B cell (primary cell): ENCODE measurements at regions of chr10 and their contacts with region 1.

Region 1: DNA sequence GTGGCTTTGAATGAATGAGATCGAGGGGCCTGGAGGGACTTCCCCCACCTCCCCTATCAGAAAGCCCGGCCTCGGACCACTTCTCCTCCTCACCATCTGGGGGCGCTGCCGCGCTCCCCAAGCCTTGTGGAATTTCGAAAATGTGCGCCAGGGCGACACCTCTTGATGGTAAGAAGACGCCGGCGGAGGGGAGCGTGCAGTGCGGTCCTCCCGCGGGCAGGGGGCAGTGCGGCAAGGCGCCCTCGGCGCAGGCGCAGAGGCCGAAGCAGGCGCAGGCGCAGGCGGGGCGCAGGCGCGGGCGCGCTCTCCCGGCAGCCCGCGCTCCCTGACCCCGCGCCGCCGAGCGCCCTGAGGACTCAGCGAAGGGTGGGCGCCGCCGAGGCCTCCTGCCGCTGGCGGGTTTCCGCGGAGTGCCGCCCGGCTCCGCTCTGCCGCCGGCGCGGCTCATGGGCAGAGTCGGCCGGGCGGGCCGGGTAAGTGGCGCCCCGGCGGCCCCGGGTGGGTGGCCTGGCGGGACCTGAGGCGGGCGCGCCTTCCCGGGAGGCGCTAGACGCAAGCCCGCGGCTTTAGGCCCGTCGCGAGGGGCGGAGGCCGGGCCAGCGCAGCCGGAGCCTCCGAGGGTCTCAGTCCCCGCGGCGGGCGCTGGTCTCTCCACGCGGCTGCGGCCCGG is at the start of gene RBM17:
- DNase-seq: peak; percentile 99
- ATAC-seq: peak; percentile 88
- H3K4me3 ChIP-seq: peak within 1 kb of the TSS; percentile 70 to 94 (median 77)
- H3K4me3 Mint-ChIP-seq: peak within 1 kb of the TSS; percentile 90
- H3K27ac ChIP-seq: peak within 1 kb of the TSS in 1 of 2 donors; percentile 78
- H3K27ac Mint-ChIP-seq: peak within 1 kb of the TSS; percentile 92
- H3K4me1 ChIP-seq: peaks cover 41 to 43% of the 10 kb centered on the region in 2 donors
- H3K4me1 Mint-ChIP-seq: peaks cover 63% of the 10 kb centered on the region
- H3K27me3 ChIP-seq: no peaks in the 10 kb centered on the region
- H3K27me3 Mint-ChIP-seq: no peaks in the 10 kb centered on the region
- CTCF ChIP-seq: peak; percentile 100
- total RNA-seq, gene RBM17: 162 and 168 TPM in 2 replicates

Region 2: GRCh38 chr10:5889624-5890451 is 199.0 kb before region 1 on chr10 and contains the starts of genes ANKRD16 and FBH1:
- CTCF ChIA-PET with region 1: interaction called, 5 read pairs
- POLR2A ChIA-PET with region 1: interaction called, 3 read pairs
- intact Hi-C with region 1: loop called (anchors 1 kb)
- DNase-seq: peak; percentile 99
- ATAC-seq: peak; percentile 84
- H3K4me3 ChIP-seq: peak within 1 kb of the TSS; percentile 51 to 88 (median 77)
- H3K4me3 Mint-ChIP-seq: peak within 1 kb of the TSS; percentile 94
- H3K27ac ChIP-seq: peak within 1 kb of the TSS; percentile 48 to 77
- H3K27ac Mint-ChIP-seq: peak within 1 kb of the TSS; percentile 88
- H3K4me1 ChIP-seq: peaks cover 28 to 33% of the 10 kb centered on the region in 2 donors
- H3K4me1 Mint-ChIP-seq: peaks cover 58% of the 10 kb centered on the region
- H3K27me3 ChIP-seq: no peaks in the 10 kb centered on the region
- H3K27me3 Mint-ChIP-seq: no peaks in the 10 kb centered on the region
- CTCF ChIP-seq: no peak
- total RNA-seq, gene ANKRD16: 12.6 and 13.1 TPM in 2 replicates
- total RNA-seq, gene FBH1: 129 and 138 TPM in 2 replicates

Region 3: GRCh38 chr10:6036861-6037321 is 52.0 kb before region 1 on chr10:
- CTCF ChIA-PET with region 1: interaction called, 13 read pairs
- POLR2A ChIA-PET with region 1: no interaction called
- intact Hi-C with region 1: no loop called
- DNase-seq: peak; percentile 49
- ATAC-seq: peak; percentile 64
- H3K4me3 ChIP-seq: no peak overlapping the region
- H3K4me3 Mint-ChIP-seq: peak overlapping the region; percentile 46
- H3K27ac ChIP-seq: no peak overlapping the region
- H3K27ac Mint-ChIP-seq: peak overlapping the region; percentile 62
- H3K4me1 ChIP-seq: peaks cover 5 to 12% of the 10 kb centered on the region in 2 donors
- H3K4me1 Mint-ChIP-seq: peaks cover 50% of the 10 kb centered on the region
- H3K27me3 ChIP-seq: no peaks in the 10 kb centered on the region
- H3K27me3 Mint-ChIP-seq: no peaks in the 10 kb centered on the region
- CTCF ChIP-seq: no peak

Region 4: DNA sequence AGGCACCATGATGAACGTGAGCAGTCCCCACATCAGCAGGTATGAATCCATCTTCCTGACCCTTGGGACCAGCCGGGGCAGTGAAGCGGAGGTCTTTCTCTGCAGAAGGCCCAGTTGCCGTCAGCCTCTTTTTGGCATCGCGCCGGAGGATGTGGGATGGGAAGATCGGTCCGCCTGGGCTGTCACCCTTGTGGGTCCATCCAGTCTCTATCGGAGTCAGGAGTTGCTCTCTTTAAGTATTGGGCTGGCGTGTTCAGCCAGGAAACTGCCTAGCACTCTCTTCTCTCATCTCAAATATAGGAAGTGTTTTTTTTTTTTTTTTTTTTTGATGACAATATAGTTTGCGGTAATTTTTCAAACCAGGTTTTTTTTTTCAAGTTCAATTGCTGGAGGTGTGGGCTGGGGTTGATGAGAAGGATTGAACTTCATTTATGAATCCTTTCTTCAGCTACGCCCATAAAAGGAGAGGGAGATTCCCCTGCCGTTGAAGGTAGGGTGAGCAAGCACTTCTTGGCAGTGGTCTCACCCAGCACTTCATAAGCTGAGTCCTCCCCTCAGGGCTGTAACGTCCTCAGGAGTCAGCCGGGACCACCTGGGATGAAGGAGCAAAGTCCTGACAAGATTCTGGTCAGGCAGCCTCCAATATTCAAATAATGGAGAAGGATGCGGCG is 26.6 kb before region 1 on chr10 and contains the start of gene IL2RA:
- CTCF ChIA-PET with region 1: interaction called, 163 read pairs
- POLR2A ChIA-PET with region 1: interaction called, 7 read pairs
- intact Hi-C with region 1: no loop called
- DNase-seq: peak; percentile 73
- ATAC-seq: peak; percentile 73
- H3K4me3 ChIP-seq: peak within 1 kb of the TSS in 4 of 5 experiments; percentile 51 to 62 (median 54)
- H3K4me3 Mint-ChIP-seq: peak within 1 kb of the TSS; percentile 97
- H3K27ac ChIP-seq: peak within 1 kb of the TSS; percentile 62 to 77
- H3K27ac Mint-ChIP-seq: peak within 1 kb of the TSS; percentile 97
- H3K4me1 ChIP-seq: peaks cover 30 to 45% of the 10 kb centered on the region in 2 donors
- H3K4me1 Mint-ChIP-seq: peaks cover 69% of the 10 kb centered on the region
- H3K27me3 ChIP-seq: no peaks in the 10 kb centered on the region
- H3K27me3 Mint-ChIP-seq: no peaks in the 10 kb centered on the region
- CTCF ChIP-seq: no peak
- total RNA-seq, gene IL2RA: 52.7 and 56.7 TPM in 2 replicates

Region 5: GRCh38 chr10:6101181-6101580 is 12.3 kb after region 1 on chr10:
- CTCF ChIA-PET with region 1: interaction called, 11 read pairs
- POLR2A ChIA-PET with region 1: no interaction called
- intact Hi-C with region 1: no loop called
- DNase-seq: peak; percentile 29
- ATAC-seq: peak; percentile 81
- H3K4me3 ChIP-seq: no peak overlapping the region
- H3K4me3 Mint-ChIP-seq: peak overlapping the region; percentile 20
- H3K27ac ChIP-seq: peak overlapping the region in 1 of 2 donors; percentile 12
- H3K27ac Mint-ChIP-seq: peak overlapping the region; percentile 57
- H3K4me1 ChIP-seq: no peaks in the 10 kb centered on the region
- H3K4me1 Mint-ChIP-seq: peaks cover 20% of the 10 kb centered on the region
- H3K27me3 ChIP-seq: no peaks in the 10 kb centered on the region
- H3K27me3 Mint-ChIP-seq: no peaks in the 10 kb centered on the region
- CTCF ChIP-seq: no peak

Region 6: DNA sequence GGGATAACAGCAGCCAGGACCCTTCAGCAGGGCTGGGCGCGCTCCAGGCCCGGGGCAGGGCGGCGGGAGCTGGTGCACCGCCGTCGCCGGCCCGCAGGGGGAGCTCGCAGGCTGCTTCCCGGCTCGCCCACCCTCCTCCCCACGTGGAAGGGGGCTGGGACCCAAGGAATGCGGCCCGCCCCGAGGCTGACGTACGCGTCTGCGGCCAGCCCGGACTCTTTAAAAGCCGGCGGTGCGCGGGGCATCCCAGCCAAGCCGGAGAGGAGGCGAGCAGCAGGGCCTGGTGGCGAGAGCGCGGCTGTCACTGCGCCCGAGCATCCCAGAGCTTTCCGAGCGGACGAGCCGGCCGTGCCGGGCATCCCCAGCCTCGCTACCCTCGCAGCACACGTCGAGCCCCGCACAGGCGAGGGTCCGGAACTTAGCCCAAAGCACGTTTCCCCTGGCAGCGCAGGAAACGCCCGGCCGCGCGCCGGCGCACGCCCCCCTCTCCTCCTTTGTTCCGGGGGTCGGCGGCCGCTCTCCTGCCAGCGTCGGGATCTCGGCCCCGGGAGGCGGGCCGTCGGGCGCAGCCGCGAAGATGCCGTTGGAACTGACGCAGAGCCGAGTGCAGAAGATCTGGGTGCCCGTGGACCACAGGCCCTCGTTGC is 114.0 kb after region 1 on chr10 and contains the start of gene PFKFB3:
- CTCF ChIA-PET with region 1: interaction called, 11 read pairs
- POLR2A ChIA-PET with region 1: no interaction called
- intact Hi-C with region 1: loop called (anchors 1 kb)
- DNase-seq: peak; percentile 90
- ATAC-seq: peak; percentile 76
- H3K4me3 ChIP-seq: peak within 1 kb of the TSS; percentile 62 to 75 (median 74)
- H3K4me3 Mint-ChIP-seq: peak within 1 kb of the TSS; percentile 97
- H3K27ac ChIP-seq: peak within 1 kb of the TSS; percentile 24 to 58
- H3K27ac Mint-ChIP-seq: peak within 1 kb of the TSS; percentile 86
- H3K4me1 ChIP-seq: peaks cover 13 to 29% of the 10 kb centered on the region in 2 donors
- H3K4me1 Mint-ChIP-seq: peaks cover 26% of the 10 kb centered on the region
- H3K27me3 ChIP-seq: no peaks in the 10 kb centered on the region
- H3K27me3 Mint-ChIP-seq: no peaks in the 10 kb centered on the region
- CTCF ChIP-seq: peak; percentile 91
- total RNA-seq, gene PFKFB3: 239 and 251 TPM in 2 replicates